ENCODE measurements at regions of chr11 and their contacts with region 1.

Region 1: GRCh38 chr11:43868852-43869567 is 11.6 kb upstream of the ALKBH3 start:
- DNase-seq: peak; percentile 70
- H3K4me3 Mint-ChIP-seq: no peak overlapping the region
- H3K27ac Mint-ChIP-seq: peak overlapping the region; percentile 28
- H3K4me1 Mint-ChIP-seq: peaks cover 24% of the 10 kb centered on the region
- H3K27me3 Mint-ChIP-seq: peaks cover 46% of the 10 kb centered on the region

Region 2: DNA sequence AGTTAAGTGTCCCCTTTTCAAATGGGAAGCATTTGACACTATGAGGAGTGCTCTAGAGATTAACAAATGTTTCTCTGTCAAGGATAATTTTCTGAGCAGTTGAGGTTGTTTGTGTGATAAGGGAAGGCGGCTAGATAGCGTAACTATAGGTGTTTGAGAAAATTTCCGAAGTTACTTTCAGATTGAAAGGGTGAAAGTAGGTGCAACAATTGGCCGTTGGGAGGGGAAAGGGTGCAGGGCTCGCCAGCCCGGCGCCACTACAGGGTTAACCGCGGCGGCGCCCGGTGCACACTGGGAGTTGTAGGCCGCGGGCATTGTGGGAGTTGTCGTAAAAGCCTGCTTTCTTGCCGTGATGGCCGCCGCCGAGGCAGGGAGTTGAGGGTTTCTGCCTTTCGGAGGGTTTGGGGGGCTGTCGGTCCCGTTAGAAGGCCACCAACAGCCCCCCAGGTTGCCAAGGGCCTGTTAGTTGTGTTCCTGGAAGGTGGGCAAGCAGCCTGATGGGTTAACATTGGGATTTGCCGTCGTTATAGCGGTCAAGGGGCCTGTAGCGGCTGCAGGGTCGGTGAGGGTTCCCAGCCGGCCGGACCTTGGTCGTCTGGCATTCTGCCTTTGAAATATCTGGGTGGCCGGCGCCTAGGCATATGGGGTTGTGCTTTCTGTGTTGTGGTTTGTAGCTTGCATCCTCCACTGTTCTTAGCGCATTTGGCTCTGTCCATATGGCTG is 225.0 kb before region 1 on chr11:
- CTCF ChIA-PET with region 1: no interaction called
- intact Hi-C with region 1: loop called (anchors 1 kb)
- DNase-seq: peak; percentile 93
- H3K4me3 Mint-ChIP-seq: peak overlapping the region; percentile 98
- H3K27ac Mint-ChIP-seq: peak overlapping the region; percentile 92
- H3K4me1 Mint-ChIP-seq: peaks cover 23% of the 10 kb centered on the region
- H3K27me3 Mint-ChIP-seq: peaks cover 12% of the 10 kb centered on the region

Region 3: DNA sequence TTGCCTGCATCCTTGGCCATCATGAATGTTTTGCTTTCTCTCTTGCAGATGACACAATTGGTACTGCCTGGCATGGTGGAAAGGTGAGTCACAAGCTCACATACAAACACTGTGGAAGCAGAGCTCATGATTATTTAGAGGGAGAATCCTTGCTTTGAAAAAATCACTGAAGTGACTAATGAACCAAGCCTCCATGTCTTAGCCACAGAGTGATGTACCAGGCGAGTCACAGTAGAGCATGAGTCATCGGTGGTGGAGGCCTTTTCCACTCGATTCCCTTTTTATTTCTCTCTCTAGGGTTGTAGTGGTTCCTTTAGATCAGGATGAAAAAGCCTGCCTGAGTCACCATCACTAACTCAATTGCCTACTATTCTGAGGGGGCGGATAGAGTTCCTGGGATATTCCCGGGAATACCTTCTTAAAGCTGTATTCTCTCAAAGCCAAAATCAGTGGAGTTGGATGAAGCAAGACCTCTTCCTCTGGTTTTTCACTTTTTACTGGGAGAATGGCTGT is 38.0 kb before region 1 on chr11:
- CTCF ChIA-PET with region 1: interaction called, 3 read pairs
- intact Hi-C with region 1: loop called (anchors 1 kb)
- DNase-seq: peak; percentile 80
- H3K4me3 Mint-ChIP-seq: no peak overlapping the region
- H3K27ac Mint-ChIP-seq: peak overlapping the region; percentile 86
- H3K4me1 Mint-ChIP-seq: peaks cover 15% of the 10 kb centered on the region
- H3K27me3 Mint-ChIP-seq: no peaks in the 10 kb centered on the region

Region 4: DNA sequence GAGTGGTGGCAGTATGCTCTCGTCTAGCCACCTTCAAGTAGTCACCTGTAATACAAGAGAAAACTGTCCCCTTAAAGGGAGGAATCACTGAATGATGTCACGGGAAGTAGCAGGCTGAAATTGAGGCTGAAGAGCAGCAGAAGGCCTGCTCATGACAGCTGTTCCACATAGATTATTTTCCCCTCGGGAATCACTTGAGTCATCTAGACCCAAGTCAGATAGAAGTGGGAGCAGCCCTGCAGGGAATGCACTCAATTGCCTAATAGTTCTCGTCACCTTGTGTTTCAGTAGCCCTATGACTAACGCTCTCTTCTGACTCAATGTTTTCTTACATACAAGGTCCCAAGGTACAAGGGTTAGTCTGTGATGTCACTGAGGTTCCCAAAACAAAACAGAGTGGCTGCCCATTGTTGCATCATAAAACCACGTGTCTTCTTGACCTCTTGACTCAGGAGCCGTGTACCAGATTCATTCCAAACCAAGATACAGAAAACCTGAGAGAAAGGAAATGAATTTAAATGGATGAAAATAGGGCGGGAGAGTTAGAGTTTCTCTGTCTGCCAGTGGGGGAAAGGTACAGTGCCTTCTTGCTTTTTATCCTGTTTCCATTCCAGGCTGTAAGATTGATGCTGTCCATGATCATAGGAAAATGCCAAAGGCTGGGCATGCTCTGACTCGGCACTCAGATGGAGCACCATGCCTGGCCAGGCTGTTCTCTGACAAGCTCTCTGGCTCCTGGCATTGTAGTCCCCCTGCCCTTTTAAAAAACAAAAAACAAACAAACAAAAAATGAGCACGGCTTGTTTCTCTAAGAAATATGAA is 51.8 kb after region 1 on chr11:
- CTCF ChIA-PET with region 1: no interaction called
- intact Hi-C with region 1: loop called (anchors 1 kb)
- DNase-seq: peak; percentile 68
- H3K4me3 Mint-ChIP-seq: no peak overlapping the region
- H3K27ac Mint-ChIP-seq: peak overlapping the region; percentile 26
- H3K4me1 Mint-ChIP-seq: peaks cover 14% of the 10 kb centered on the region
- H3K27me3 Mint-ChIP-seq: no peaks in the 10 kb centered on the region

Region 5: DNA sequence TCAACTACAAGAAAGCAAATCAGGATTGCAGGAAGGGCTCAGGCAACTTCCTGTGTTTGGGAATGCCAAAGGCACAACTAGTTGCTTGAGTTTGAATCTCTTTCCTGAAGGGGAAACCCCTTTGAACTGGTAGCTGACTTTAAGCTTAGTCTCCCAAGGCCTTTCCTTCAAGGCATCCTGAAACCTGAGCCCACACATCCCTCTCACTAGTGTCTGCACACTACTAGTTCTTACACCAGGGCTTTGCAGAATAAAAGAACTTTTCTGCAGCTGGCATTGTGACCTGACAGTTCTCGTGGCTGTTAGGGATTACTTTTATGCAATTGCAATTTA is 321.8 kb after region 1 on chr11:
- CTCF ChIA-PET with region 1: no interaction called
- intact Hi-C with region 1: loop called (anchors 5 kb)
- DNase-seq: no peak
- H3K4me3 Mint-ChIP-seq: no peak overlapping the region
- H3K27ac Mint-ChIP-seq: no peak overlapping the region
- H3K4me1 Mint-ChIP-seq: peaks cover 32% of the 10 kb centered on the region
- H3K27me3 Mint-ChIP-seq: no peaks in the 10 kb centered on the region

Measured in activated naive CD4-positive, alpha-beta T cell treated with anti-CD3 and anti-CD28 coated beads for 36 hours (primary cell).